K562 (cell line): ENCODE measurements at regions of chr17 and their contacts with region 1.

Region 1: DNA sequence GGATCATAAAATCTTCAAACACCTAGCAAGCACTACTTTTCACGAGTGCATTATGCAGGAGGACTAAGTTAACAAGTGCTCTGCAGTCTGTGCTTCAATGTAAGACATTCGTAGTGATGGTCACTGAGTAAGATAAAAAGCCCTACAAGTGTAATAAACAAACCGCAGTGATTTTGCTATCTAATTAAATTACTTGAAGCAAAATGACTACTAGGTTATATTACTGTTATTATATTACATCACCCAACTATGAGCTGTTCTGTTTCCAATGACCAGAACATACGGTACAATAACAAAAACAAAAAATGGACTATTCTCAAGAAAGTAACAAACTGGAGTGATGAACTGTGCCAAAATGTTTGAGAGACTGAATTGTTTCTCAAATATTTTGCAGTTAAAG is 11.2 kb downstream of the KLHL10 start:
- DNase-seq: no peak
- ATAC-seq: no peak
- H3K4me3 ChIP-seq: no peak overlapping the region
- H3K27ac ChIP-seq: no peak overlapping the region
- H3K4me1 ChIP-seq: no peaks in the 10 kb centered on the region
- H3K27me3 ChIP-seq: no peaks in the 10 kb centered on the region
- CTCF ChIP-seq: no peak
- EP300 ChIP-seq: no peak
- POLR2A ChIP-seq: no peak
- RAD21 ChIP-seq: no peak

Region 2: GRCh38 chr17:41864836-41865595 is 16.2 kb after region 1 on chr17 and contains the start of gene KLHL11:
- CTCF ChIA-PET with region 1: no interaction called
- POLR2A ChIA-PET with region 1: interaction called, 10 read pairs
- in situ Hi-C with region 1: no loop called
- intact Hi-C with region 1: no loop called
- DNase-seq: peak; percentile 87 to 95 (median 90)
- ATAC-seq: peak; percentile 98
- H3K4me3 ChIP-seq: peak within 1 kb of the TSS; percentile 96
- H3K27ac ChIP-seq: peak within 1 kb of the TSS; percentile 81
- H3K4me1 ChIP-seq: peaks cover 20 to 25% of the 10 kb centered on the region in 2 experiments
- H3K27me3 ChIP-seq: no peaks in the 10 kb centered on the region
- CTCF ChIP-seq: peak in 2 of 3 experiments; percentile 35 to 44; a peak in 2 of 6 replicates
- EP300 ChIP-seq: no peak
- POLR2A ChIP-seq: peak; percentile 87
- RAD21 ChIP-seq: no peak; a peak in 1 of 4 replicates
- polyA plus RNA-seq, gene KLHL11: 0.20 to 0.28 TPM

Region 3: DNA sequence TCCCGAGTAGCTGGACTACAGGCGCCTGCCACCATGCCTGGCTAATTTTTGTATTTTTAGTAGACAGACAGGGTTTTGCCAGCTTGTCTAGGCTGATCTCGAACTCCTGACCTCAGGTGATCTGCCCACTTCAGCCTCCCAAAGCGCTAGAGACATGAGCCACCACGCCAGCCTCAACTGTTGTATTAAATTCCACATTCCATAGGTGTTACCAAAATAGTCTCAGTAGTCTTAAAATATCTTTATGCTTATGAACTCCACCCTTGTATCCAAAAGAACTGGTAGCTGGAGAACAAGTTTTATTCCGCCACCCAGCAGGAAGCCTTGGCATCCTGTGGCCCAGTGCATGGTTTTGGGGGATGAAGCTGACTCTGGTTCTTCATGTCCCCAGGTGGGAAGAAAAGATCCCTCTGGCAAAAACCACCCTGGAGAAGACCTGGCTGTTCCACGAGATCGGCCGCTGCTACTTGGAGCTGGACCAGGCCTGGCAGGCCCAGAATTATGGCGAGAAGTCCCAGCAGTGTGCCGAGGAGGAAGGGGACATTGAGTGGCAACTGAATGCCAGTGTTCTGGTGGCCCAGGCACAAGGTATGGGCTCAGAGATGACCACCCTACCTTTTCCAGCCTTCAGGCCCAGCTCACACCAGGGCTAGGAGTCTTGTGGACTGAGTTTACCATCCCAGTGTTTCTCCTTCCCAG is 100.1 kb after region 1 on chr17:
- CTCF ChIA-PET with region 1: no interaction called
- POLR2A ChIA-PET with region 1: no interaction called
- in situ Hi-C with region 1: no loop called
- intact Hi-C with region 1: no loop called
- DNase-seq: no peak
- ATAC-seq: no peak
- H3K4me3 ChIP-seq: no peak overlapping the region
- H3K27ac ChIP-seq: no peak overlapping the region
- H3K4me1 ChIP-seq: peaks cover 0 to 3% of the 10 kb centered on the region in 2 experiments; a peak in 1 of 5 replicates
- H3K27me3 ChIP-seq: no peaks in the 10 kb centered on the region
- CTCF ChIP-seq: no peak
- EP300 ChIP-seq: no peak
- POLR2A ChIP-seq: no peak
- RAD21 ChIP-seq: no peak

Region 4: DNA sequence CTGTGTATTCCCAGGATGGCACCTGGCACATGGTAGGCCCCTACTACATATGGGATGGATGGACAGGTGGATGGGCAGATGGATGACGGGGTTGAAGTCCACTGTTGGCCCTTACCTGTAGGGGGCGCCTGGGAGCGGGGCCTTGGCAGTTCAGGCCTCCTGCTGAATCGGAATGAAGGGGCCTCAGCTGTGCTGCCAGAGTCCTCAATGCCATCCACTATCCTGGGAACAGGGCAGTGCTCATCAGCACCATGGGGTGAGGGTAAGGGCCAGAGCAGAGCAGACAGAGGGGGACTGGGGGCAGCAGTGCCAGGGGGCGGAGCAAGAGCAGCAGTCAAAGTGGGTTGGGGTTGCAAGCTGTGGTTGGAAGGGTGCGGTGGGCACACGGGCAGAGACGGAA is 314.3 kb after region 1 on chr17:
- CTCF ChIA-PET with region 1: no interaction called
- POLR2A ChIA-PET with region 1: no interaction called
- in situ Hi-C with region 1: no loop called
- intact Hi-C with region 1: no loop called
- DNase-seq: peak; percentile 68 to 76 (median 68)
- ATAC-seq: peak; percentile 86
- H3K4me3 ChIP-seq: no peak overlapping the region
- H3K27ac ChIP-seq: no peak overlapping the region
- H3K4me1 ChIP-seq: peaks cover 7 to 30% of the 10 kb centered on the region in 2 experiments; a peak in 3 of 5 replicates
- H3K27me3 ChIP-seq: no peaks in the 10 kb centered on the region
- CTCF ChIP-seq: peak; percentile 73 to 89 (median 77)
- EP300 ChIP-seq: no peak
- POLR2A ChIP-seq: no peak
- RAD21 ChIP-seq: peak in 1 of 2 experiments; percentile 39; a peak in 1 of 4 replicates